A673 (cell line): ENCODE measurements at regions of chr16 and their contacts with region 1.

Region 1: GRCh38 chr16:48623304-48624016 is 13.5 kb upstream of the N4BP1 start:
- DNase-seq: peak; percentile 87
- H3K4me3 ChIP-seq: peak overlapping the region; percentile 34
- H3K27ac ChIP-seq: no peak overlapping the region
- H3K4me1 ChIP-seq: no peaks in the 10 kb centered on the region
- H3K27me3 ChIP-seq: no peaks in the 10 kb centered on the region
- CTCF ChIP-seq: peak; percentile 99

Region 2: DNA sequence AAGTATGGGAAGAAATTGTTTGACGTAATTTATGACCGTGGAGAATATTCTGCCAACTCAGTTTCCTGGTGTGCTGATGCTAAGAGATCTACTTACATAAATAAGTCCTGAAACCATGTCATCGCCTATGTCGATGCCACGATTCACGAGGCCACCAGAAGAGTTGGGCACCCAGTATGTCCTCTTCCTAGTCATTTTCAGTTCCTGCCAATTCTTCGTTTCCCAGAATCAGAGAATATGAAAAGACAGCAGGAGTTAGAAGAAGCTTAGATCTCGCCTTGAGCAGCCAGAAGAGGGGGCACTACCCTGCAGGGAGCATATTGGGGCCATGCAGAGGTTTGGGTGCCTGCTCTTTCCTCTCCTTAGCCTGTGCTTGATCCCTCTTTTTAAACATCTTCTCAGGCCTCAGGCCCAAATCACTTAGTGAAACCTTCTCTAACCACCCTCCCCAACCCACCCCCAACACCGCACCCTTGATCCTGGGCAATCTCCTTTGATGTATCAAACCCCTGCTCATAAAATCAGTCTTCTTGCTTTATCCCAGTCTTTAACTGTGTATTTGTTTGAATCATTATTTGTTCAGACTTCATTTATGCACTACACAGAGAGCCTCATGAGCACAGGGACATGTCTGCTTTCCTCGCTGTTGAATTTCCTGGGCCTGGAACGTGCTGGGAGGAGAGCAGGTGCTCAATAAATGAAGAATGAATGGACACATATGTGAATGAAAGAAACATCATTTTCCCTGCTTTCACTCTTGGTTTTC is 391.6 kb before region 1 on chr16:
- CTCF ChIA-PET with region 1: interaction called, 7 read pairs
- POLR2A ChIA-PET with region 1: interaction called, 12 read pairs
- intact Hi-C with region 1: loop called (anchors 2 kb)
- DNase-seq: peak; percentile 59
- H3K4me3 ChIP-seq: no peak overlapping the region
- H3K27ac ChIP-seq: no peak overlapping the region
- H3K4me1 ChIP-seq: no peaks in the 10 kb centered on the region
- H3K27me3 ChIP-seq: no peaks in the 10 kb centered on the region
- CTCF ChIP-seq: peak; percentile 71

Region 3: DNA sequence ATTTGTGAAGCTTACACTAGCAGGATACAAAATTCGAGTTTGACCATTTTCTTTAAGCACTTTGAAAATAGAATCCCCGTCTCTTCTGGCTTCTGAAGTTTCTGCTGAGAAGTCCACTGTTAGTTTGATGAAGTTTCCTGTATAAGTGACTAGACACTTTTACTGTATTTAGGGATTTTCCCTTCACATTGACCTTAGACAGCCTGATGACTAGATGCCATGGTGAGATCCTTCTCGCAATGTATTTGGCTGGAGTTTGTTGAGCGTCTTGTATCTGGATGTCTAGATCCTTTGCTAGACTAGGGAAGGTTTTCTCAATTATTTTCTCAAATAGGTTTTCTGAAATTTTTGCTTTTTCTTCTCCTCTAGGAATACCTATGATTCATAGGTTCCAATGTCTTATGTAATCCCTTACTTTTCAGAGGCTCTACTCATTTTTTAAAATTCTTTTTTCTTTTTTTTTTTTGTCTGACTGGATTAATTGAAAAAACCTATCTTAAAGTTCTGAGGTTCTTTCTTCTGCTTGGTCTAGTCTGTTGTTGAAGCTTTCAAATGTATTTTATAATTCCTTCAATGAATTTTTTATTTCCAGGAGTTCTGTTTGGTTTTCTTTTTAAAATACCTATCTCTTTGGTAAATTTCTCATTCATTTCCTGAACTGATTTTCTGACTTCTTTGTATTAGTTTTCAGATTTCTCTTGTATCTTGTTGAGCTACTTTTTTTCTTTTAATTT is 312.4 kb before region 1 on chr16:
- CTCF ChIA-PET with region 1: no interaction called
- POLR2A ChIA-PET with region 1: no interaction called
- intact Hi-C with region 1: no loop called
- DNase-seq: no peak
- H3K4me3 ChIP-seq: no peak overlapping the region
- H3K27ac ChIP-seq: no peak overlapping the region
- H3K4me1 ChIP-seq: no peaks in the 10 kb centered on the region
- H3K27me3 ChIP-seq: no peaks in the 10 kb centered on the region
- CTCF ChIP-seq: no peak

Region 4: DNA sequence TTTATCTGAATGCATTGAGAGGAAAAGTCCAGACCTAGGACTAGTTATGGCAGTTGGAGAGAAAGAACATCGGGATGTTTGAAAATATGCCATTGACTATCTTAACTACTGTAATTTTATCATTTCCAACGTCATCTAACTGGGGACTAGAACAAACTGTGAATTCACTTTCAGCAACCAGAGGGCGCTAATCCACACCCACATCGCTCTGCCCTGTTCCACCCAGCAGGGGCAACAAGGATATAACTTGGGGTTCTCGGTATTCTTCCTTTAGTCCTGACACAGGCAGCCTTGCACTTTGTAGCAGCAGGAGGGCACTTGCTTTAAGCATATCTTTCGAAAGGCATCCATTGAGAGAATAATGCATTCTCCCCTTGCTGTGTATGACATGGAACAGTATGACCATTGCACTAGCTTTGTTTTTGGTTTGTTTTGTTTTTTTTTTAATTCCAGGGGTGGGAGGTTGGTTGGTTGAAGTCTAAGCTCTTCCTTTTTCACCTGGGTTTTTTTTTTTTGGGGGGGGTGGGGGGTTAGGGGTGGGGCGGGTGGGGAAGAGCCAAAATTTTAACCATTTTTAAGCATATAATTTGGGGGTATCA is 269.8 kb before region 1 on chr16:
- CTCF ChIA-PET with region 1: interaction called, 17 read pairs
- POLR2A ChIA-PET with region 1: interaction called, 4 read pairs
- intact Hi-C with region 1: loop called (anchors 1 kb)
- DNase-seq: peak; percentile 91
- H3K4me3 ChIP-seq: no peak overlapping the region
- H3K27ac ChIP-seq: no peak overlapping the region
- H3K4me1 ChIP-seq: no peaks in the 10 kb centered on the region
- H3K27me3 ChIP-seq: no peaks in the 10 kb centered on the region
- CTCF ChIP-seq: peak; percentile 93

Region 5: DNA sequence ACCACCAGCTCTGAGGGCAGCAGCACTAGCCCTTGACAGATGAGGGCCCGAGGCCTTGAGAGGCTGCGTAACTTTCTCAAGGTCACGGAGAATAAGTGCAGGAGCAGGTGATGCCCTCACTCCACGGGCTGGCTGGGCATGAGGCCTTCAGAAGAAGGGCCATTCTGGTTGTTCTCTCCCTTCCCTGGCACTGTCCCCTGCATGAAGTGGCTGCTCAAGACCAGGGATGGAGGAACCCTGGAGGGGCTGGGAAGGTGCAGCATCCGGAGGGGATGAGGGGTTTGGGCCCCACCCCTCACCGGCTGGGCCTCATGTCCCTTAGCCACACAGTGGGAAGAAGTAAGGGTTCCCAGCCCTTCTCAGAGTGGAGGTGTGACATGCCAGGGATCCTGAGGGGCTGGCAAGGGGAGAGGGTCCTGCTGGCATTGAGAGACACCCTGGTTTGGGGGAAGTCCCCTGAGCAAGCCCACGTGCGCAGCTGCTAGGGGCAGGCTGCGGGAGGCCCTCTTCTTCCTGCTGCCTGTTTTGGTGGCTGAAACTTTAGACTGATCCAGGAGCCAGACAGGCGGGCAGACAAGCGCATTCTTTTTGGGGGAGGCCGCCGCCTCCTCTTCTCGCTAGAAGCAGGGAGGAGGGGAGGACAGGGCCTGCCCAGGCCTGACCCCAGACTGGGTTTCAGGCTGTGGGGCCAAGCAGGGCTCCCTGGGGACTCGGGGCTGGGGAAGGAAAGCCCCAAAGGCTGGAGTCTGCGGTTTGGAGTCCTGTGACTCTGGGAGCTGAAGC is 87.4 kb before region 1 on chr16:
- CTCF ChIA-PET with region 1: no interaction called
- POLR2A ChIA-PET with region 1: no interaction called
- intact Hi-C with region 1: loop called (anchors 5 kb)
- DNase-seq: no peak
- H3K4me3 ChIP-seq: no peak overlapping the region
- H3K27ac ChIP-seq: peak overlapping the region; percentile 54
- H3K4me1 ChIP-seq: no peaks in the 10 kb centered on the region
- H3K27me3 ChIP-seq: no peaks in the 10 kb centered on the region
- CTCF ChIP-seq: no peak

Region 6: GRCh38 chr16:49382916-49383315 is 759.5 kb after region 1 on chr16:
- CTCF ChIA-PET with region 1: no interaction called
- POLR2A ChIA-PET with region 1: no interaction called
- intact Hi-C with region 1: no loop called
- DNase-seq: peak; percentile 24
- H3K4me3 ChIP-seq: no peak overlapping the region
- H3K27ac ChIP-seq: no peak overlapping the region
- H3K4me1 ChIP-seq: no peaks in the 10 kb centered on the region
- H3K27me3 ChIP-seq: peaks cover 19% of the 10 kb centered on the region
- CTCF ChIP-seq: peak; percentile 47